ENCODE measurements at regions of chr1 and their contacts with region 1.

Region 1: DNA sequence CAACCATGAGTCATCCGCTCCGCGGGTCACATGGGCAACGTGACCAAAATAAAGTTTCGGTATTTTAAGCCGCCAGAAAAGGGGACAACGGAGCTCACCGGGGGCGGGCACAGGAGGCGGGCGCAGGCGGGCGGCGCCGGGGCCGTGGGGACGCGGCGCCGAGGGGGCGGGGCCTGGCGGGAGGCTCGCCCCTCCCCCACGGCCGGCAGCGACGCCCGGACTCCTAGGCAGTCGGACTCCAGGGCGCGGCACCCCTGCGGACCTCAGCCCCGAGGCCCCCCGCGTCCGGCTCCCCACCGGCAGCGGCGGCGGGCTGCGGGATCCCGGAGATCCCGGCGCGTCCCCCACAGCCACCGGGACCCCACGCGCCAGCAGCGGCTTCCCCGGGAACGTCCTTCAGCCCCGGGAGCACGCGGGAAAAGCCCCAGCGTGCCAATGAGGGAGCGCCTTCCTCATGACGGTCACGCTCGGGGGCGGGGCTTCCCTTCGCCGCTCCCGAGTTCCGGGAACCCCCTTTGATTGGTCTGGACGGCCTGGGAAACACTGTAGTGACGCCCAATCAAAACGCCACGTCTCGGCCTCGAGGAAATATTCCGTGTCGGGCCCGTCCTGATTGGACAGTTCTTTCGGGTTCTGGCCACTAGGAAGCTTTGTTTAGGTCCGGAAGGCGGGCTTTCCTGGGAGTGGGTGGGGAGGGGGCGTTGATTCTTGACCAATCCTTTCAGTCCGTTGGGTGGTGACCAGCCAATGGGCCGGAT is 515 bp upstream of the CAMTA1 start:
- DNase-seq: peak; percentile 97 to 100 (median 99)
- ATAC-seq: peak; percentile 81
- H3K4me3 ChIP-seq: peak overlapping the region; percentile 80
- H3K4me3 Mint-ChIP-seq: peak overlapping the region; percentile 95
- H3K27ac ChIP-seq: peak overlapping the region; percentile 73 to 93
- H3K27ac Mint-ChIP-seq: peak overlapping the region; percentile 91
- H3K4me1 ChIP-seq: peaks cover 25% of the 10 kb centered on the region
- H3K4me1 Mint-ChIP-seq: peaks cover 44% of the 10 kb centered on the region
- H3K27me3 ChIP-seq: no peaks in the 10 kb centered on the region
- H3K27me3 Mint-ChIP-seq: no peaks in the 10 kb centered on the region
- CTCF ChIP-seq: no peak

Region 2: DNA sequence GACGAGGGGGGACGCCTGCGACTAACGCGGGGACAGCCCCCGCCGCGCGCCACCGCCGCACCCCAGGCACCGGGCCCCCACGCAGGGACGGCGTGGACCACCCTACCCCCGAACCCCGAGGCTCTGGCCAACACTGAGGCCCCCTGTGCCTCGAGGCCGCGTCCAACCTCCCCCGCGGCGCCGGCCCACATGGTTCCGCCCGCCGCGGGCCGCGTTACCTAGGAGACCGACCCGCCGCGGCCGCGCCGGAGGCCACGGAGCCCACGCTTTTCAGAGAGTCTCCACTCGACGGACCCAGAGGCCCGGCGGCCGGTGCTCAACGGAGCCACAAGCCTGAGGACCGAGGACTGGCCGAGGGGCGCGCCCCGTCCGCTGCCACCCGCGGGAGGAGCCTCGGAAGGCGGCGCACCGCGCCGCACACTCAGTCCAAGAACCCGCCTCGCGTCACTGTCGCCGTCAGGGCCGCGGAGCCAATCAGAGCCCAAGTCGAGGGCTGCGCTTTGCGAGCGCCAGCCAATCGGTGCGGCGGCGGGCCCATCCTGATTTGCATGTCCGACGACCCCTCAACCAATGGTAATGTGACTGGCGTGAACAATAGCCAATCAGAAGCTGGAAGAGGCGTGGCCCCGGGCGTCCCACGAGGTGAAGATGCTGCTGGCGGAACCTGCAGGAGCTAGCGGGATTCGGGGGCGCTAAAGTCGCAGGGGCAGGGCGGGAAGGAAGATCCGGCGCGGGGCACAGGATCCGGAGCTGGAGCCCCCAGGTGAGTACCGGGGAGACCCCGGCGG is 792.5 kb before region 1 on chr1 and contains the start of gene NPHP4:
- CTCF ChIA-PET with region 1: no interaction called
- POLR2A ChIA-PET with region 1: no interaction called
- intact Hi-C with region 1: loop called in 1 of 2 experiments (anchors 10 kb)
- DNase-seq: peak; percentile 98 to 100 (median 99)
- ATAC-seq: peak; percentile 86
- H3K4me3 ChIP-seq: peak within 1 kb of the TSS; percentile 64 to 87
- H3K4me3 Mint-ChIP-seq: peak within 1 kb of the TSS; percentile 96
- H3K27ac ChIP-seq: peak within 1 kb of the TSS; percentile 90 to 99
- H3K27ac Mint-ChIP-seq: peak within 1 kb of the TSS; percentile 93
- H3K4me1 ChIP-seq: peaks cover 35% of the 10 kb centered on the region
- H3K4me1 Mint-ChIP-seq: peaks cover 33% of the 10 kb centered on the region
- H3K27me3 ChIP-seq: no peaks in the 10 kb centered on the region
- H3K27me3 Mint-ChIP-seq: no peaks in the 10 kb centered on the region
- CTCF ChIP-seq: no peak
- total RNA-seq, gene NPHP4: 3.1 to 3.7 TPM

Region 3: GRCh38 chr1:6041432-6042062 is 743.2 kb before region 1 on chr1:
- CTCF ChIA-PET with region 1: no interaction called
- POLR2A ChIA-PET with region 1: no interaction called
- intact Hi-C with region 1: no loop called
- DNase-seq: peak in 5 of 9 experiments; percentile 21 to 45 (median 36)
- ATAC-seq: peak; percentile 48
- H3K4me3 ChIP-seq: no peak overlapping the region
- H3K4me3 Mint-ChIP-seq: no peak overlapping the region
- H3K27ac ChIP-seq: no peak overlapping the region
- H3K27ac Mint-ChIP-seq: no peak overlapping the region
- H3K4me1 ChIP-seq: peaks cover 16% of the 10 kb centered on the region
- H3K4me1 Mint-ChIP-seq: peaks cover 27% of the 10 kb centered on the region
- H3K27me3 ChIP-seq: no peaks in the 10 kb centered on the region
- H3K27me3 Mint-ChIP-seq: no peaks in the 10 kb centered on the region
- CTCF ChIP-seq: peak; percentile 53

Region 4: DNA sequence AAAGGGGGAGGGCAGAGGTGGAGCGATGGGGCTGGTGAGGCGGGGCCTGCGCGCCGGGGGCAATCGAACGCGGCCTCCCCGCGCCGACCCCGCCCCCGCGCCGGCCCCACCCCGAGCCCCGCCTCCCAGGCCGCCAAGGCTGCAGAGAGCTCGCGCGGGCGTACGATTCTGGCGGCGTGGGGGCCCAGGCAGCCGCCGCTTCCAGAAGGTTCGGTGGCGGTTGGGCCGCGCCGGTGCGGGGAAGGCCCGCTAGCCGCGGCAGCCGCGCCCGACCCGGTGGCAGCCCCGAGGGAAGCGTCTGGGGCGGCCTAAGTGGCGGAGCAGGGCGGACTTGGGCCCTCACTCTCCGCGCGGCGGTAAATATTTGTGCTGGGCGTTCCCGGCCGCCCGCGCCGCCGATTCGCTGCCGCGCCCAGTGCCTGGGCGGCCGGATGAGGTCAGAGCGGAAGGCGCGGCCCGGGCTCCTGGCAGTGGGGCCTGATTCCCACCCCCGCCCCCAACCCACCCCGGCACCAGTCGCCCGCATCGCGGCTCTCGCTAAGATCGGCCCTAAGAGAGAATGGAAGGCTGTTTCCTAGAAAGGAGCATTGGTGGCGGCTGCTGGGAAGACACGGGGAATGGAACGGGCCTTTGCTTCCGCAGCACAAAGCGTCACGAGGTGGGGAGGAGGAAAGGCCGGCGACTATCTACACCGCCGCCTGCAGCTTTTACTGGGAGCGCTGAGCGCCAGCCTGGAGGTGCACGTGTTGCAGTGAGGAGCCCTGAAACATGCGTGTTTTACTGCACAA is 391.1 kb before region 1 on chr1 and contains the start of gene ACOT7:
- CTCF ChIA-PET with region 1: no interaction called
- POLR2A ChIA-PET with region 1: no interaction called
- intact Hi-C with region 1: loop called in 1 of 2 experiments (anchors 5 kb)
- DNase-seq: peak; percentile 79 to 94 (median 89)
- ATAC-seq: peak; percentile 93
- H3K4me3 ChIP-seq: peak within 1 kb of the TSS; percentile 33 to 62
- H3K4me3 Mint-ChIP-seq: peak within 1 kb of the TSS; percentile 88
- H3K27ac ChIP-seq: peak within 1 kb of the TSS; percentile 54 to 88
- H3K27ac Mint-ChIP-seq: peak within 1 kb of the TSS; percentile 90
- H3K4me1 ChIP-seq: peaks cover 15% of the 10 kb centered on the region
- H3K4me1 Mint-ChIP-seq: peaks cover 24% of the 10 kb centered on the region
- H3K27me3 ChIP-seq: no peaks in the 10 kb centered on the region
- H3K27me3 Mint-ChIP-seq: no peaks in the 10 kb centered on the region
- CTCF ChIP-seq: no peak
- total RNA-seq, gene ACOT7: 2.8 to 3.1 TPM

Region 5: GRCh38 chr1:6743189-6744101 is 41.3 kb before region 1 on chr1:
- CTCF ChIA-PET with region 1: no interaction called
- POLR2A ChIA-PET with region 1: interaction called, 17 read pairs
- intact Hi-C with region 1: no loop called
- DNase-seq: peak in 4 of 9 experiments; percentile 14 to 50 (median 26)
- ATAC-seq: peak; percentile 40
- H3K4me3 ChIP-seq: no peak overlapping the region
- H3K4me3 Mint-ChIP-seq: no peak overlapping the region
- H3K27ac ChIP-seq: no peak overlapping the region
- H3K27ac Mint-ChIP-seq: peak overlapping the region; percentile 43
- H3K4me1 ChIP-seq: peaks cover 7% of the 10 kb centered on the region
- H3K4me1 Mint-ChIP-seq: peaks cover 12% of the 10 kb centered on the region
- H3K27me3 ChIP-seq: no peaks in the 10 kb centered on the region
- H3K27me3 Mint-ChIP-seq: no peaks in the 10 kb centered on the region
- CTCF ChIP-seq: no peak

Region 6: DNA sequence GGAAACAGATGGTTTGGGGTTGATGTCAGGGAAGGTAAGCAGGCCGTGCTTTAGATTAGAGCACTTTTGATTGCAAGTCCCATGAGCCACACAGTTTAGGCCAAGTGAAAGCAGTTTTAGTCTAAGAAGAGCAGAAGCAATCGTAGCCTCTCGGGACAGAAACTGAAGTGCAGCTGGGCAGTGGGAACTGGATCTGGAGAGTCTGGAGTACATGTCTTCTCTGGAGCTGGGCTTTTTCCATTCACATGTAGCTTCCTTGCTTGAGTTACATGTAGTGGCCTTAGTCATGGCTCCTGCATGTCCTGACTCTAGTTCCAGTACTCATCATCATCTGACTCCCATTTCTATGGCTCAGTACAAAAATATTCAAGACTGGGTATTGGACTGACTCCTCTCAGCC is 17.2 kb after region 1 on chr1:
- CTCF ChIA-PET with region 1: no interaction called
- POLR2A ChIA-PET with region 1: no interaction called
- intact Hi-C with region 1: no loop called
- DNase-seq: no peak
- ATAC-seq: no peak
- H3K4me3 ChIP-seq: no peak overlapping the region
- H3K4me3 Mint-ChIP-seq: no peak overlapping the region
- H3K27ac ChIP-seq: no peak overlapping the region
- H3K27ac Mint-ChIP-seq: no peak overlapping the region
- H3K4me1 ChIP-seq: peaks cover 22% of the 10 kb centered on the region
- H3K4me1 Mint-ChIP-seq: peaks cover 57% of the 10 kb centered on the region
- H3K27me3 ChIP-seq: no peaks in the 10 kb centered on the region
- H3K27me3 Mint-ChIP-seq: no peaks in the 10 kb centered on the region
- CTCF ChIP-seq: no peak

Region 7: GRCh38 chr1:7760245-7760644 is 975.5 kb after region 1 on chr1:
- CTCF ChIA-PET with region 1: no interaction called
- POLR2A ChIA-PET with region 1: no interaction called
- intact Hi-C with region 1: loop called in 1 of 2 experiments (anchors 10 kb)
- DNase-seq: no peak
- ATAC-seq: no peak
- H3K4me3 ChIP-seq: no peak overlapping the region
- H3K4me3 Mint-ChIP-seq: no peak overlapping the region
- H3K27ac ChIP-seq: no peak overlapping the region
- H3K27ac Mint-ChIP-seq: no peak overlapping the region
- H3K4me1 ChIP-seq: no peaks in the 10 kb centered on the region
- H3K4me1 Mint-ChIP-seq: no peaks in the 10 kb centered on the region
- H3K27me3 ChIP-seq: no peaks in the 10 kb centered on the region
- H3K27me3 Mint-ChIP-seq: peaks cover 7% of the 10 kb centered on the region
- CTCF ChIP-seq: no peak

Measured in CD8-positive, alpha-beta T cell (primary cell).